PC-3 (cell line): ENCODE measurements at regions of chr3 and their contacts with region 1.

Region 1: GRCh38 chr3:33113772-33114621 is at the start of gene CRTAP:
- DNase-seq: peak; percentile 93
- ATAC-seq: peak; percentile 81
- H3K4me3 ChIP-seq: peak within 1 kb of the TSS; percentile 74
- H3K27ac ChIP-seq: peak within 1 kb of the TSS; percentile 78
- H3K4me1 ChIP-seq: peaks cover 24% of the 10 kb centered on the region
- H3K27me3 ChIP-seq: no peaks in the 10 kb centered on the region
- CTCF ChIP-seq: no peak
- total RNA-seq, gene CRTAP: 174 and 184 TPM in 2 replicates

Region 2: GRCh38 chr3:33096093-33096868 is 17.7 kb before region 1 on chr3:
- CTCF ChIA-PET with region 1: no interaction called
- POLR2A ChIA-PET with region 1: no interaction called
- intact Hi-C with region 1: loop called (anchors 1 kb)
- DNase-seq: peak; percentile 28
- ATAC-seq: peak; percentile 52
- H3K4me3 ChIP-seq: peak overlapping the region; percentile 99
- H3K27ac ChIP-seq: peak overlapping the region; percentile 51
- H3K4me1 ChIP-seq: peaks cover 11% of the 10 kb centered on the region
- H3K27me3 ChIP-seq: no peaks in the 10 kb centered on the region
- CTCF ChIP-seq: no peak

Region 3: DNA sequence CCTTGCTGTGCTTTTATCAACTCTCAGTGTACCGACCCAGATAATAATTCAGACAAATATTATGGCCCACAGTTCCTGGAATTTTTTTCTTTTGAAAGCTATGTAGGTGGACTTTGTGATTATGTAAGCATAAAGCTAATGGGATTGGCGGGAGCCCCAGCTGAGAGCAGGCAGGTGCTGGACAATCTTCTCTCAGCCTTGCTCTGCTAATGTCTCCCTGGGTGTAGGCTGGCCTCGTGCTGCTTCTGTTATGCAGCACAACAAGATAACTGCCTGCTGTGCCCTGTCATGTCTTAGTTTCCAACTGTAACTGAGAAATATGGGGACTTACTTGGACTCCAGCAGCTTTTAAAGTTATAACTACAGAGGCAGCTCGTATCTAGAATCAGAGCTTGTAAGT is 1099.5 kb after region 1 on chr3:
- CTCF ChIA-PET with region 1: no interaction called
- POLR2A ChIA-PET with region 1: no interaction called
- intact Hi-C with region 1: no loop called
- DNase-seq: no peak
- ATAC-seq: no peak
- H3K4me3 ChIP-seq: no peak overlapping the region
- H3K27ac ChIP-seq: no peak overlapping the region
- H3K4me1 ChIP-seq: no peaks in the 10 kb centered on the region
- H3K27me3 ChIP-seq: peaks cover 5% of the 10 kb centered on the region; the same call in 1 of the 2 replicates
- CTCF ChIP-seq: no peak